ENCODE measurements at regions of chr3 and their contacts with region 1.

Region 1: GRCh38 chr3:101809178-101810021 is 30.4 kb downstream of the NXPE3 start:
- DNase-seq: no peak
- H3K4me3 ChIP-seq: no peak overlapping the region
- H3K27ac ChIP-seq: peak overlapping the region in 3 of 4 donors; percentile 24 to 53 (median 45)
- H3K4me1 ChIP-seq: peaks cover 15 to 38% (median 30%) of the 10 kb centered on the region in 4 donors
- H3K27me3 ChIP-seq: no peaks in the 10 kb centered on the region
- CTCF ChIP-seq: peak; percentile 62 to 68 (median 66)
- EP300 ChIP-seq: no peak
- POLR2A ChIP-seq: no peak

Region 2: GRCh38 chr3:101976473-101976872 is 167.1 kb after region 1 on chr3:
- intact Hi-C with region 1: loop called (anchors 10 kb)
- DNase-seq: no peak
- H3K4me3 ChIP-seq: no peak overlapping the region
- H3K27ac ChIP-seq: peak overlapping the region; percentile 9 to 56 (median 36)
- H3K4me1 ChIP-seq: peaks cover 0 to 43% (median 35%) of the 10 kb centered on the region in 4 donors
- H3K27me3 ChIP-seq: no peaks in the 10 kb centered on the region
- CTCF ChIP-seq: no peak
- EP300 ChIP-seq: no peak
- POLR2A ChIP-seq: no peak

Region 3: GRCh38 chr3:102225407-102226132 is 416.2 kb after region 1 on chr3:
- intact Hi-C with region 1: loop called (anchors 2 kb)
- DNase-seq: no peak
- H3K4me3 ChIP-seq: no peak overlapping the region
- H3K27ac ChIP-seq: no peak overlapping the region
- H3K4me1 ChIP-seq: peaks cover 0 to 21% (median 15%) of the 10 kb centered on the region in 4 donors
- H3K27me3 ChIP-seq: no peaks in the 10 kb centered on the region
- CTCF ChIP-seq: peak; percentile 65 to 72 (median 68)
- EP300 ChIP-seq: no peak
- POLR2A ChIP-seq: no peak